BJ (cell line): ENCODE measurements at regions of chr11 and their contacts with region 1.

Region 1: GRCh38 chr11:12731841-12732336 is 57.7 kb downstream of the TEAD1 start:
- DNase-seq: peak; percentile 63
- H3K4me3 ChIP-seq: no peak overlapping the region
- H3K27me3 ChIP-seq: no peaks in the 10 kb centered on the region
- CTCF ChIP-seq: no peak

Region 2: DNA sequence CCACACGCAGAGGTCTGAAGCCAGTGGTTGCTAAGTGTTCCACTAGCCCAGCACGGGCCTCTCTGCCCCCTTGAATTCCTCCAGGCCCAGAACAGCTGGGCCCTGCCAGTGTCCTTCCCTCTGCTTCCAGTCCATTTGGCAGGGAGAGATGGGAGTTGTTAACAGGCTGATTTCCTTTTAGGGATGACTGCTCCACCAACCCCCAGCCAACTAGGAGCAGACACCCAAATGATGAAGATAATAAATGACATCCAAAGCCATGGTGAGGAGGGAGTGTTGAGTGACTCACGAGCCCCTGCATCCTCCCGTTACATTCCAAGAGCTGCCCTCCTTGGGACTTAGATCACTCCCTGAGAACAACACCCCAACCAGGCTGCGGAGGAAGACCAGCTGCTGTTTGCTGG is 334.0 kb before region 1 on chr11:
- CTCF ChIA-PET with region 1: no interaction called
- POLR2A ChIA-PET with region 1: interaction called, 10 read pairs
- DNase-seq: peak; percentile 95
- H3K4me3 ChIP-seq: no peak overlapping the region
- H3K27me3 ChIP-seq: no peaks in the 10 kb centered on the region
- CTCF ChIP-seq: no peak

Region 3: DNA sequence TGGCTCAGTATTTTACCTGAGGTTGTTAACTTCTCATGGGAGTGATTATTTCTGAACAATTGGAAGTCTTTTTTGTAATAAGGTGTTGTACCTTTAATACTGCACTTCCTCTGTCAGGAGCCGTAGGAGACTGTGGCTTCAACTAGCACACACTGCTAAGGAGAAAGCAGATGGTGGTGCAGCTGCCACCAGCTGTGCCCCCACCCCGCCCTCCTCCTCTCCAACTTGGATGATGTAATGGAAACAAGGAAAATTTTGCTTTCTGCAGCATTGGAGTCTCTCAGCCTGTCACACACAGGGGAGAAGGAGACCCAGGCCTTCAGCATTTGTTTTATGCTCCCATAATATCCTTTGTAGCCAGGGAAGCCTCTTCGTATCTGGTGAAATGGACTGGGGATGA is 33.5 kb after region 1 on chr11:
- CTCF ChIA-PET with region 1: no interaction called
- POLR2A ChIA-PET with region 1: no interaction called
- DNase-seq: no peak
- H3K4me3 ChIP-seq: no peak overlapping the region
- H3K27me3 ChIP-seq: no peaks in the 10 kb centered on the region
- CTCF ChIP-seq: no peak

Region 4: GRCh38 chr11:12805846-12806512 is 74.1 kb after region 1 on chr11:
- CTCF ChIA-PET with region 1: no interaction called
- POLR2A ChIA-PET with region 1: interaction called, 11 read pairs
- DNase-seq: no peak
- H3K4me3 ChIP-seq: no peak overlapping the region
- H3K27me3 ChIP-seq: no peaks in the 10 kb centered on the region
- CTCF ChIP-seq: no peak